Ascending aorta (tissue), 2 donors: ENCODE measurements at regions of chrX and their contacts with region 1.

Region 1: DNA sequence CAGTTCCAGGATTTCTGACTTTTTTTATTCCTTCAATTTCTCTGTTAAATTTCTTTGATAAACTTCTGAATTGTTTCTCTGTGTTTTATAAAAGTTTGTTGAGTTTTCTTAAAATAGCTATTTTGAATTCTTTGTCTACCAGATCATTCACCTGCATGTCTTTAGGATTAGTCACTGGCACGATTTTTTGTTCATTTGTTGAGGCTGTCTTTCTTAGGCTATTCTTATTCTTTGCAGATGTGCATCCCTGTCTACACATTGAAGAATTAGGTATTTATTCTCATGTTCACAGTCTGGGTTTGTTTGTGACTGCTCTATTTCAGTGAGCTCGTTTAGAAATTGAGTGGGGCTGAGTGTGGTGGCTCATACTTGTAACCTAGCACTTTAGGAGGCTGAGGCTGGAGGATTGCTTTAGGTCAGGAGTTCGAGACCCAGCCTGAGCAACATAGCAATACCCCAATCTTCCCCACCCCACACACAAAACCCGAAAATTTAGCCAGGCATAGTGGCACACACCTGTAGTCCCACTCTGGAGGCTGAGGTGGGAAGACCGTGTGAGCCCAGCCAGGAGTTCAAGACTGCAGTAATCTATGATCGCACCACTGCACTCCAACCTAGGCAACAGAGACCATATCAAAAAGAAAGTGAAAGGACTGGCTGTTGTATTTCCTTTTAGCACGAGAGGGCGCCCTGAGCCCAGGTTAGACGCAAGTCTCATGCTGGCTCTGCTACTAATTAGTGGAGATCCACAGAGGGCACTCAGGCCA is 42.0 kb downstream of the F8 start:
- DNase-seq: peak in 1 of 2 donors; percentile 81
- H3K4me3 ChIP-seq: peak overlapping the region; percentile 16 to 49
- H3K27ac ChIP-seq: no peak overlapping the region
- H3K4me1 ChIP-seq: no peaks in the 10 kb centered on the region
- H3K27me3 ChIP-seq: no peaks in the 10 kb centered on the region
- CTCF ChIP-seq: peak; percentile 49 to 72 (median 51)

Region 2: GRCh38 chrX:155056877-155057792 is 76.6 kb after region 1 on chrX:
- intact Hi-C with region 1: loop called (anchors 1 kb)
- DNase-seq: peak in 1 of 2 donors; percentile 82
- H3K4me3 ChIP-seq: peak overlapping the region; percentile 8 to 18
- H3K27ac ChIP-seq: peak overlapping the region in 1 of 2 donors; percentile 36
- H3K4me1 ChIP-seq: no peaks in the 10 kb centered on the region
- H3K27me3 ChIP-seq: no peaks in the 10 kb centered on the region
- CTCF ChIP-seq: peak; percentile 38 to 71 (median 67)